Activated CD4-positive, alpha-beta T cell treated with anti-CD3 and anti-CD28 coated beads for 36 hours (primary cell): ENCODE measurements at regions of chr7 and their contacts with region 1.

Region 1: GRCh38 chr7:63925623-63926460 is 72.8 kb upstream of the ZNF722 start:
- DNase-seq: peak; percentile 95
- ATAC-seq: peak; percentile 97
- H3K4me3 Mint-ChIP-seq: peak overlapping the region; percentile 87
- H3K27ac Mint-ChIP-seq: peak overlapping the region; percentile 93
- H3K4me1 Mint-ChIP-seq: peaks cover 16% of the 10 kb centered on the region
- H3K27me3 Mint-ChIP-seq: no peaks in the 10 kb centered on the region

Region 2: DNA sequence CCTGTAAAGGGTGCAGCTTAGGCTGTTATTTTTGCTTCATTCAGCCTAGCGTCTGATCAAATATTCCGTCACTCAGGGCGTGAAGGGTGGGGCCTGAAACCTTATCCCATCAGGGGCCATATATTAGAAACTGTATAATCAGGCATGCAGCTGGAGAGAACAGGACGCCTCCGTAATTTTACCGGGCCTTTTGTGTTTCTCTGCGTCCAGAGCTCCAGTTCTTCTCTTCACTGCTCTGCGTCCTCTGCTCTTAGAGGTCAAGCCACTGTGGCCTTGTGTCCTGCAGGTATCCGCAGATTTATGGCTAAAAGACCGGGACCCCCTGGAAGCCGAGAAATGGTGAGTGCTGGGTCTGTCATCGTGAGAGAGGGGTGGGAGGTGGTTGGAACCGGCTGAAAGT is 281.1 kb after region 1 on chr7 and contains the start of gene ZNF735:
- CTCF ChIA-PET with region 1: no interaction called
- POLR2A ChIA-PET with region 1: no interaction called
- intact Hi-C with region 1: no loop called
- DNase-seq: no peak
- ATAC-seq: no peak
- H3K4me3 Mint-ChIP-seq: no peak within 1 kb of the TSS
- H3K27ac Mint-ChIP-seq: no peak within 1 kb of the TSS
- H3K4me1 Mint-ChIP-seq: no peaks in the 10 kb centered on the region
- H3K27me3 Mint-ChIP-seq: no peaks in the 10 kb centered on the region
- total RNA-seq, gene ZNF735: not detected

Region 3: GRCh38 chr7:64307254-64308015 is 381.6 kb after region 1 on chr7:
- CTCF ChIA-PET with region 1: no interaction called
- POLR2A ChIA-PET with region 1: interaction called, 5 read pairs
- intact Hi-C with region 1: loop called (anchors 1 kb)
- DNase-seq: peak; percentile 95
- ATAC-seq: peak; percentile 97
- H3K4me3 Mint-ChIP-seq: peak overlapping the region; percentile 84
- H3K27ac Mint-ChIP-seq: peak overlapping the region; percentile 91
- H3K4me1 Mint-ChIP-seq: peaks cover 25% of the 10 kb centered on the region
- H3K27me3 Mint-ChIP-seq: no peaks in the 10 kb centered on the region

Region 4: DNA sequence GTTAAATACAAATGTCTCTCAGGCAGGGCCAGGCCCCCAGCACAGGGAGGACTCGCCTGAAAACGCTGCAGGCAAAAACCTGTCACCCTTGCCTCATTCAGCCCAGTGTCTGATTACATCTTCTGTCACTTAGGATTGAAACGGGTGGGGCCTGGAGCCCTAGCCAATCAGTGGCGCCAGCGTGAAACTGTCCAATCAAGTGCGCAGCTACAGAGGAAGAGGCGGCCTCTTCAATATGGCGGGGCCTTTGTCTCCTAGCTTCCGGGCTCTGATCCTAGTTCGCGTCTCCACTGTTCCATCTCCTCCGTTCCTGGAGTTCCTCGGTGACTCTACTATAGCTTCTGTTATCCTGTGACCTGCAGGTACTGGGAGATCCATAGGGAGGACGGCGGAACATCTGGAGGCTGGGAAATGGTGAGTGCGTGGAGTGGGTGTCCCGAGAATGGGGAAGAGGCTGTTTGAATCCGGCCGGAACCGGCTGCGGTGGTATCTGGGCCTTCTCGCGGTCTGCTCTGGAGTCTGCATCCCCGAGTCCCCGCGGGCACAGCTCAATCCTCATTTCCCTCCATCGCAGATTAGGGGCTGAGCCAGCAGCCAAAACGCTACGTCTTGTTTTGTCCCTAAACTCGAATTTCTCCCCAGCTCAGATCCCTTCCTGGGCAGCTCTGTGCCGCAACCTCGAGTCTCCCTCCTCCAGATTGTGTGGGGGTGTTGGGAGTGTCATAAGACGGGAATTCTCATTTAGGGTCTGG is 388.1 kb after region 1 on chr7 and contains the start of gene ZNF736:
- CTCF ChIA-PET with region 1: no interaction called
- POLR2A ChIA-PET with region 1: no interaction called
- intact Hi-C with region 1: loop called (anchors 1 to 2 kb)
- DNase-seq: peak; percentile 93
- ATAC-seq: peak; percentile 100
- H3K4me3 Mint-ChIP-seq: peak within 1 kb of the TSS; percentile 89
- H3K27ac Mint-ChIP-seq: peak within 1 kb of the TSS; percentile 99
- H3K4me1 Mint-ChIP-seq: peaks cover 30% of the 10 kb centered on the region
- H3K27me3 Mint-ChIP-seq: no peaks in the 10 kb centered on the region
- total RNA-seq, gene ZNF736: 23.5 to 25.5 TPM

Region 5: GRCh38 chr7:64611406-64612116 is 685.7 kb after region 1 on chr7:
- CTCF ChIA-PET with region 1: no interaction called
- POLR2A ChIA-PET with region 1: no interaction called
- intact Hi-C with region 1: no loop called
- DNase-seq: no peak
- ATAC-seq: no peak
- H3K4me3 Mint-ChIP-seq: no peak overlapping the region
- H3K27ac Mint-ChIP-seq: no peak overlapping the region
- H3K4me1 Mint-ChIP-seq: no peaks in the 10 kb centered on the region
- H3K27me3 Mint-ChIP-seq: no peaks in the 10 kb centered on the region

Region 6: GRCh38 chr7:64946772-64947171 is 1020.9 kb after region 1 on chr7:
- CTCF ChIA-PET with region 1: no interaction called
- POLR2A ChIA-PET with region 1: no interaction called
- intact Hi-C with region 1: no loop called
- DNase-seq: peak; percentile 65
- ATAC-seq: peak; percentile 75
- H3K4me3 Mint-ChIP-seq: no peak overlapping the region
- H3K27ac Mint-ChIP-seq: no peak overlapping the region
- H3K4me1 Mint-ChIP-seq: peaks cover 3% of the 10 kb centered on the region
- H3K27me3 Mint-ChIP-seq: peaks cover 34% of the 10 kb centered on the region